ENCODE measurements at regions of chr13 and their contacts with region 1.

Region 1: DNA sequence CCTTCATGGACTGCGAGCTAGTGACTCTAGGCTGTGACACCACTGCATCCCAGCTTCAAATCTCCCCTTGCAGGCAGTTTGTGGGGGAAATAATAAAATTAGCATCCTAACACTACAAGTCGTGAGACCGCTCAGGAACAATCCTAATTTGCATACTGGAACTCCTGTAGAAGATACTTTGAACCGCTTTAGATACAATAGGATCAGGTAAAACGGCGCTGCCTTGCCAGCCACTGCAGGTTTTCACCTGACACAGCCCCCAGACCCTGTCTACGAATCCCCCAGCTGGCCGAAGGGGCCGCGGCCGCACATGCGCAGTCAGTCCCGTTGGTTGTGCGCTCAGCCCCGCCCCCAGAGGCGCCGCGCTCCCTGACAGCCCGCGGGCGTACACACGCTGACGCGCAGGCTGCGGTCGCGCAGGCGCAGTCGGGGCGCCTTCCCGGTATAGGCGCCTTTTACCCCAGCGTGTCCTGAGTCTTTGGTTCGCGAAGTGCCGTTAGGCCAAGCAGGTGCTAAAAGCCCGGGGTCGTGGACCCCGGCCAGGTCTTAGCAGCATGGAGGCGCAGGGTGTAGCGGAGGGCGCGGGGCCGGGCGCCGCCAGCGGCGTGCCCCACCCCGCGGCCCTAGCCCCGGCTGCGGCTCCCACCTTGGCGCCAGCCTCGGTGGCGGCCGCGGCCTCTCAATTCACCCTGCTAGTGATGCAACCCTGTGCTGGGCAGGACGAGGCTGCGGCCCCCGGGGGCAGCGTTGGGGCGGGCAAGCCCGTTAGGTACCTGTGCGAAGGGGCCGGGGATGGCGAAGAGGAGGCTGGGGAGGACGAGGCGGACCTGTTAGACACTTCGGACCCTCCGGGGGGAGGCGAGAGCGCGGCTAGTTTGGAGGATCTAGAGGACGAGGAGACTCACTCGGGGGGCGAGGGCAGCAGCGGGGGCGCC is at the start of gene RFXAP:
- DNase-seq: peak; percentile 80 to 95 (median 90)
- ATAC-seq: peak; percentile 93
- H3K4me3 ChIP-seq: peak within 1 kb of the TSS; percentile 82 to 83
- H3K4me3 Mint-ChIP-seq: peak within 1 kb of the TSS; percentile 93
- H3K27ac ChIP-seq: peak within 1 kb of the TSS; percentile 69 to 87
- H3K27ac Mint-ChIP-seq: peak within 1 kb of the TSS; percentile 94
- H3K4me1 ChIP-seq: peaks cover 25% of the 10 kb centered on the region
- H3K4me1 Mint-ChIP-seq: peaks cover 49% of the 10 kb centered on the region
- H3K27me3 ChIP-seq: no peaks in the 10 kb centered on the region
- H3K27me3 Mint-ChIP-seq: peaks cover 5% of the 10 kb centered on the region
- CTCF ChIP-seq: no peak
- total RNA-seq, gene RFXAP: 4.1 to 5.4 TPM

Region 2: GRCh38 chr13:36346222-36347083 is 472.6 kb before region 1 on chr13 and contains the start of gene SPART:
- CTCF ChIA-PET with region 1: no interaction called
- POLR2A ChIA-PET with region 1: no interaction called
- intact Hi-C with region 1: loop called (anchors 1 to 2 kb)
- DNase-seq: peak; percentile 61 to 90 (median 83)
- ATAC-seq: peak; percentile 90
- H3K4me3 ChIP-seq: peak within 1 kb of the TSS; percentile 74 to 94
- H3K4me3 Mint-ChIP-seq: peak within 1 kb of the TSS; percentile 93
- H3K27ac ChIP-seq: peak within 1 kb of the TSS; percentile 92 to 96
- H3K27ac Mint-ChIP-seq: peak within 1 kb of the TSS; percentile 96
- H3K4me1 ChIP-seq: peaks cover 16% of the 10 kb centered on the region
- H3K4me1 Mint-ChIP-seq: peaks cover 38% of the 10 kb centered on the region
- H3K27me3 ChIP-seq: no peaks in the 10 kb centered on the region
- H3K27me3 Mint-ChIP-seq: peaks cover 4% of the 10 kb centered on the region
- CTCF ChIP-seq: peak; percentile 93
- total RNA-seq, gene SPART: 16.2 to 20.1 TPM

Region 3: GRCh38 chr13:37058910-37059847 is 240.1 kb after region 1 on chr13 and contains the start of gene SUPT20H:
- CTCF ChIA-PET with region 1: no interaction called
- POLR2A ChIA-PET with region 1: no interaction called
- intact Hi-C with region 1: loop called (anchors 1 to 2 kb)
- DNase-seq: peak; percentile 90 to 97 (median 95)
- ATAC-seq: peak; percentile 91
- H3K4me3 ChIP-seq: peak within 1 kb of the TSS; percentile 93 to 96
- H3K4me3 Mint-ChIP-seq: peak within 1 kb of the TSS; percentile 90
- H3K27ac ChIP-seq: peak within 1 kb of the TSS; percentile 95 to 96
- H3K27ac Mint-ChIP-seq: peak within 1 kb of the TSS; percentile 99
- H3K4me1 ChIP-seq: peaks cover 24% of the 10 kb centered on the region
- H3K4me1 Mint-ChIP-seq: peaks cover 50% of the 10 kb centered on the region
- H3K27me3 ChIP-seq: no peaks in the 10 kb centered on the region
- H3K27me3 Mint-ChIP-seq: no peaks in the 10 kb centered on the region
- CTCF ChIP-seq: no peak
- total RNA-seq, gene SUPT20H: 53.0 to 55.0 TPM

Region 4: DNA sequence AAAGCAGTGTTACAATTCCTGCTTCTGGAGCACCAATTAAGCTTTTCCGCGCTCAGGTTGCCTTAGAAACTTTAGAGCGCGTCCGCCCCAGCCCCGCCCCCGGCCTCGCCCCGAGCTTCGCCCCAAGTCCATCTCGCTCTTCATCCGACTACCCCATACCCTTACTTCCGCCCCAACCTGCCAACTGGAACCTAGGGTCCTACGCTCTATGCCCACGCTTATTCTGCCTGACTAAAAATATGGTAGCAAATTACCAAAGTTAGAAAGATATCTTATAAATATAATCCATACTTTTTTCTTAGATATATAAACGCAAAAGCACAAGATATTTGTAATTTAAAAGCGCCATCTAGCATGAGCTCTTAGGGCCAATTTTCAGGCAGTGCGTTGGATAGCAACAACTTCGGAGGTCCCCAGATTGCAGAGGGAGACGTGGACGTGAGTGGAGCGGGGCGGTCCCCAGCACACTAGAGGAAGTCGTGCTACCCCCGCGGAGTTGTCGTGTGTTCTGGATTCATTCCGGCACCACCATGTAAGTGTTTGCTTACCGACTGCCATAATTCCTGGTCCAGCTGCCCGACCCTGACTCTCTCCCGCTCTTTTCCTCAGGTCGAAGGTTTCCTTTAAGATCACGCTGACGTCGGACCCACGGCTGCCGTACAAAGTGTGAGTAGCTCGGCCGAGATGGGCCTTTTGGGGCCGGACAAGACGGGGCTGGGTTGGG is 1530.5 kb after region 1 on chr13 and contains the start of gene UFM1:
- CTCF ChIA-PET with region 1: no interaction called
- POLR2A ChIA-PET with region 1: no interaction called
- intact Hi-C with region 1: loop called (anchors 1 to 5 kb)
- DNase-seq: peak; percentile 68 to 95 (median 86)
- ATAC-seq: peak; percentile 94
- H3K4me3 ChIP-seq: peak within 1 kb of the TSS; percentile 82 to 92
- H3K4me3 Mint-ChIP-seq: peak within 1 kb of the TSS; percentile 99
- H3K27ac ChIP-seq: peak within 1 kb of the TSS; percentile 85 to 93
- H3K27ac Mint-ChIP-seq: peak within 1 kb of the TSS; percentile 99
- H3K4me1 ChIP-seq: peaks cover 21% of the 10 kb centered on the region
- H3K4me1 Mint-ChIP-seq: peaks cover 42% of the 10 kb centered on the region
- H3K27me3 ChIP-seq: no peaks in the 10 kb centered on the region
- H3K27me3 Mint-ChIP-seq: no peaks in the 10 kb centered on the region
- CTCF ChIP-seq: no peak
- total RNA-seq, gene UFM1: 94.0 to 97.0 TPM